ENCODE measurements at regions of chr10 and their contacts with region 1.

Region 1: GRCh38 chr10:26839966-26840627 is 20.7 kb downstream of the ABI1 start:
- DNase-seq: peak; percentile 74
- ATAC-seq: peak; percentile 60
- H3K4me3 ChIP-seq: no peak overlapping the region
- H3K27ac ChIP-seq: no peak overlapping the region
- H3K4me1 ChIP-seq: peaks cover 5% of the 10 kb centered on the region
- H3K27me3 ChIP-seq: no peaks in the 10 kb centered on the region
- CTCF ChIP-seq: no peak
- POLR2A ChIP-seq: no peak
- RAD21 ChIP-seq: no peak

Region 2: GRCh38 chr10:26665080-26666048 is 174.7 kb before region 1 on chr10:
- CTCF ChIA-PET with region 1: no interaction called
- POLR2A ChIA-PET with region 1: no interaction called
- dilution Hi-C with region 1: no loop called
- in situ Hi-C with region 1: no loop called
- intact Hi-C with region 1: no loop called
- DNase-seq: no peak
- ATAC-seq: no peak
- H3K4me3 ChIP-seq: no peak overlapping the region
- H3K27ac ChIP-seq: no peak overlapping the region
- H3K4me1 ChIP-seq: no peaks in the 10 kb centered on the region
- H3K27me3 ChIP-seq: no peaks in the 10 kb centered on the region
- CTCF ChIP-seq: no peak
- POLR2A ChIP-seq: no peak
- RAD21 ChIP-seq: no peak

Region 3: GRCh38 chr10:26714415-26715136 is 125.5 kb before region 1 on chr10:
- CTCF ChIA-PET with region 1: no interaction called
- POLR2A ChIA-PET with region 1: no interaction called
- dilution Hi-C with region 1: no loop called
- in situ Hi-C with region 1: no loop called
- intact Hi-C with region 1: no loop called
- DNase-seq: no peak
- ATAC-seq: no peak
- H3K4me3 ChIP-seq: no peak overlapping the region
- H3K27ac ChIP-seq: no peak overlapping the region
- H3K4me1 ChIP-seq: no peaks in the 10 kb centered on the region
- H3K27me3 ChIP-seq: no peaks in the 10 kb centered on the region
- CTCF ChIP-seq: no peak
- POLR2A ChIP-seq: no peak
- RAD21 ChIP-seq: no peak

Region 4: DNA sequence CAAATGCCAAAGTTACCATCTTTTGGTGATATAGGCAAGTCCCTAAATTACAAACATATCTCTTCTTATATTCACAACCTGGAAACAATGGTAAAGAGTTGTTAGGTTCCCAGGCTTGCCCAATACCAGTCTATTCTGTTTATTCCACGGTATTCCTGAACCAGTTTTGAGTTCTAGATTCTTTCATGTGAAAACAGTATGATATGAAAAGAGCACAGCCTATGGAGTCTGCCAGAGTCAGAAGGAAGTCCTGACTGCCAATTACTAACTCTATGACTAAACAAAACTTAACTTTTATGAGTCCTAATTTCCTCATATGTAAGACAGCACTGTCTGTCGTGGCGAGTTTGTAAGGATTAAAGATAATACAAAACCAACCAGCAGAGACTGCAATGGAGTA is 15.1 kb after region 1 on chr10:
- CTCF ChIA-PET with region 1: no interaction called
- POLR2A ChIA-PET with region 1: no interaction called
- dilution Hi-C with region 1: no loop called
- in situ Hi-C with region 1: no loop called
- intact Hi-C with region 1: loop called (anchors 2 kb)
- DNase-seq: peak; percentile 50
- ATAC-seq: peak; percentile 30; the same call in 1 of the 2 replicates
- H3K4me3 ChIP-seq: no peak overlapping the region
- H3K27ac ChIP-seq: no peak overlapping the region
- H3K4me1 ChIP-seq: 0 out of 2 replicates have a peak, but pooled peaks cover 2% of the 10 kb centered on the region
- H3K27me3 ChIP-seq: no peaks in the 10 kb centered on the region
- CTCF ChIP-seq: no peak
- POLR2A ChIP-seq: no peak
- RAD21 ChIP-seq: no peak